ENCODE measurements at regions of chr1 and their contacts with region 1.

Region 1: GRCh38 chr1:115764541-115764940 is 4.0 kb downstream of the CASQ2 start:
- DNase-seq: peak; percentile 26
- H3K27ac ChIP-seq: no peak overlapping the region
- CTCF ChIP-seq: no peak; the same call in 1 of the 2 replicates

Region 2: GRCh38 chr1:115706587-115707425 is 57.7 kb before region 1 on chr1:
- CTCF ChIA-PET with region 1: interaction called, 11 read pairs
- POLR2A ChIA-PET with region 1: no interaction called
- DNase-seq: no peak
- H3K27ac ChIP-seq: no peak overlapping the region
- CTCF ChIP-seq: peak; percentile 67

Region 3: DNA sequence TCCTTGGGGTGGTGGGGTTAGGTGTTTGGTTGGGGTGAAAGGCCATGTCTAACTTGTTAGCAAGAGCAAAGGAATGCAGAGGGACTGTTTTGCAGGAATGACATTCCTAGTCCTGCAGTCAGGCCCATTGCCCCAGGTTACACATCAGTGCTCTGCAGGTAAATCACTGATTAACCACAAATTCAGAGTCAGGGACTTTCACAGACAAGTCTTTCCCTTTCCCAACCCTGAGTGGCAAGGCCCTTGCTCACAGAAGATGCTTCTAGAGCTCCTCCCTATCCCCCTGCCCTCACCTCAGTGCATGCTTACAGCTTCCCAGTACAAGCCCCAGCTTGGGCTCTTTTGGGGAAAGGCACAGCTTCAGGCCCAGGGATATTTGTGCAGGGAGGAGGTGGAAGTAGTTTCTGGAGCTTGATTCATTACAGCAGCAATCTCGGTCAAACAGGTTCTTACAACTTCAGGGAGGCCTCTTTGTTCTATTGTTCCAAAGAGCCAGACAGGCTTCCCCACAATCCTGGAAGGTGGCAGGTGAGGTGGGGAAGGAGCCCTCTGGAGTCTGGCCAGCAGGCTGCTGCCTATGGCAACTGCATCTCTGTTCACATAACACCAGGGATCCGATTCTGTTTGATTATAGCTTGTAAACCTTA is 49.9 kb before region 1 on chr1:
- CTCF ChIA-PET with region 1: interaction called, 10 read pairs
- POLR2A ChIA-PET with region 1: no interaction called
- DNase-seq: peak; percentile 78
- H3K27ac ChIP-seq: no peak overlapping the region
- CTCF ChIP-seq: no peak

Region 4: GRCh38 chr1:115854005-115854404 is 89.5 kb after region 1 on chr1:
- CTCF ChIA-PET with region 1: no interaction called
- POLR2A ChIA-PET with region 1: no interaction called
- DNase-seq: no peak
- H3K27ac ChIP-seq: no peak overlapping the region
- CTCF ChIP-seq: no peak